CD4-positive, alpha-beta memory T cell (primary cell): ENCODE measurements at regions of chr3 and their contacts with region 1.

Region 1: GRCh38 chr3:42502429-42503250 is at the start of gene VIPR1:
- DNase-seq: peak; percentile 93 to 95 (median 94)
- H3K4me3 ChIP-seq: peak within 1 kb of the TSS; percentile 70 to 88
- H3K4me3 Mint-ChIP-seq: peak within 1 kb of the TSS; percentile 95 to 99 (median 96)
- H3K27ac ChIP-seq: peak within 1 kb of the TSS; percentile 64
- H3K27ac Mint-ChIP-seq: peak within 1 kb of the TSS; percentile 83 to 97 (median 95)
- H3K4me1 ChIP-seq: peaks cover 51% of the 10 kb centered on the region
- H3K4me1 Mint-ChIP-seq: peaks cover 27 to 61% (median 44%) of the 10 kb centered on the region in 4 donors
- H3K27me3 ChIP-seq: peaks cover 9% of the 10 kb centered on the region
- H3K27me3 Mint-ChIP-seq: peaks cover 7 to 10% of the 10 kb centered on the region in 2 donors
- total RNA-seq, gene VIPR1: 93.6 to 104 TPM

Region 2: DNA sequence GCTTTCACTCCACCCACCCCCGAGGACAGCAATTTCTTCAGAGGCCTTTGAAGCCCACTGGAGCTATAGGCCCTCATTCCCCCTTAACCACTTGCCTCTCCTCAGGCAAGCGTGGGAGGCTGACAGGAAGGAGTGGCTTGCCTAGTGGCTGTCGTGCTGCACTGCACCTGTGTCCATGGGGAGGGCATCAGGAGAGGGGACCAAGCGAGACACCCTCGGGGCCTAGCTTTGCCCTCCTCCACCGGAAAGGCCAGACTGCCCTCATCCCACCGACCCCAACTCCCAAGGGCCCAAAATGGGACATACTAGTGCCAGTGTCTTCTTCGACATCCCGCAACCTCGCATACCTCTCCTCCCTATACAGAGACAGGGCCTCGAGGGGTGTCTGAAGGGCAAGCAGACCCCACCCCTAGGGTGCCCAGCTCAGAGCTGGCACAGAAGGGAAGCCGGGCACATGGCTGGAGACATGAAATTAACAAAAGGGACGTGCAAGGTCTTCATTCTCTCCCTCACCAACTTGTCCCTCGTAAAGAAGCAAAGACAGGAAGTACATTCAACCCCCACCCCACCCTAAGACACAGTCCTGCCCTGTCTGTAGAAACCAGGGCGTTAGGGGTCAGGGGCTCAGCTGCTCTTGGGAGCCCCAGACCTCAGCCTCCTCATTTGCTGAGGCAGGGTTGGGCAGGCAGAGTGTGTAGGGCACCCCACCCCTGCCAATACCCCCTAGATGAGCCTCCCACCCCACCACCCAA is 24.2 kb after region 1 on chr3:
- CTCF ChIA-PET with region 1: interaction called, 1,823 read pairs
- POLR2A ChIA-PET with region 1: interaction called, 24 read pairs
- intact Hi-C with region 1: no loop called
- DNase-seq: peak; percentile 30 to 55 (median 42)
- H3K4me3 ChIP-seq: peak overlapping the region in 1 of 2 donors; percentile 1
- H3K4me3 Mint-ChIP-seq: peak overlapping the region in 7 of 8 donors; percentile 45 to 86 (median 74)
- H3K27ac ChIP-seq: peak overlapping the region; percentile 41
- H3K27ac Mint-ChIP-seq: peak overlapping the region; percentile 93 to 95 (median 94)
- H3K4me1 ChIP-seq: peaks cover 68% of the 10 kb centered on the region
- H3K4me1 Mint-ChIP-seq: peaks cover 44 to 94% (median 65%) of the 10 kb centered on the region in 4 donors
- H3K27me3 ChIP-seq: no peaks in the 10 kb centered on the region
- H3K27me3 Mint-ChIP-seq: no peaks in the 10 kb centered on the region

Region 3: DNA sequence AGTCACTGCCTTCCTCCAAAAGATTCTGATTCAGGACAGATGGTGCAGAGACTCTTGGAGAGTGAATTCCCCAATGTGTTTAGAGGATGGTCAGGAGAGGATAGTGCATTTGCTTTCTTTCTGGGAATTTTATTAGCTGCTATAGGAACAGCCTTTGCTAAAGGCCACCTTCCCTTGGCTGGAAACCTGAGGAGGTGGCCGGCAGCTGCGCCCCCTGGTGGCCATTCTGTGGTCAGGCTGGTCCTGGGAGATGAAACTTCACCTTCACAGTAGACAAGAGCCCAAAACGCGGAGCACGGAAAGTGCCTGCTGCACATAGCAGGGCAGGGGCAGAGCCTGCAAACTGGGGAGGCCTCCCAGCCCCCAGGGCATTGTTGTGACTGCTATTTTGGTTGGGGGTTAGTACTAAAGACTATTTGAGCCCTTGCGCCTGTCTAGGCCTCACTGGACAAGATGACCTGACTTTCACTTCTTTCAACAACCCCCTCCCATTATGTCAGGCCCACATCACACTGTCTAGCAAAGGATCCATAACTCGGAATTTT is 44.8 kb after region 1 on chr3:
- CTCF ChIA-PET with region 1: interaction called, 1,823 read pairs
- POLR2A ChIA-PET with region 1: interaction called, 28 read pairs
- intact Hi-C with region 1: no loop called
- DNase-seq: peak; percentile 57 to 68 (median 59)
- H3K4me3 ChIP-seq: no peak overlapping the region
- H3K4me3 Mint-ChIP-seq: no peak overlapping the region
- H3K27ac ChIP-seq: no peak overlapping the region
- H3K27ac Mint-ChIP-seq: peak overlapping the region in 4 of 7 donors; percentile 13 to 70 (median 44)
- H3K4me1 ChIP-seq: no peaks in the 10 kb centered on the region
- H3K4me1 Mint-ChIP-seq: peaks cover 4 to 26% (median 12%) of the 10 kb centered on the region in 4 donors
- H3K27me3 ChIP-seq: no peaks in the 10 kb centered on the region
- H3K27me3 Mint-ChIP-seq: no peaks in the 10 kb centered on the region

Region 4: GRCh38 chr3:42581709-42582473 is 79.3 kb after region 1 on chr3 and contains the start of gene SEC22C:
- CTCF ChIA-PET with region 1: interaction called, 10 read pairs
- POLR2A ChIA-PET with region 1: interaction called, 18 read pairs
- intact Hi-C with region 1: no loop called
- DNase-seq: peak; percentile 94 to 97 (median 95)
- H3K4me3 ChIP-seq: peak within 1 kb of the TSS; percentile 59 to 78
- H3K4me3 Mint-ChIP-seq: peak within 1 kb of the TSS; percentile 86 to 96 (median 94)
- H3K27ac ChIP-seq: peak within 1 kb of the TSS; percentile 96
- H3K27ac Mint-ChIP-seq: peak within 1 kb of the TSS; percentile 97 to 100 (median 99)
- H3K4me1 ChIP-seq: peaks cover 39% of the 10 kb centered on the region
- H3K4me1 Mint-ChIP-seq: peaks cover 38 to 59% (median 47%) of the 10 kb centered on the region in 4 donors
- H3K27me3 ChIP-seq: no peaks in the 10 kb centered on the region
- H3K27me3 Mint-ChIP-seq: no peaks in the 10 kb centered on the region
- total RNA-seq, gene SEC22C: 55.8 to 56.6 TPM

Region 5: DNA sequence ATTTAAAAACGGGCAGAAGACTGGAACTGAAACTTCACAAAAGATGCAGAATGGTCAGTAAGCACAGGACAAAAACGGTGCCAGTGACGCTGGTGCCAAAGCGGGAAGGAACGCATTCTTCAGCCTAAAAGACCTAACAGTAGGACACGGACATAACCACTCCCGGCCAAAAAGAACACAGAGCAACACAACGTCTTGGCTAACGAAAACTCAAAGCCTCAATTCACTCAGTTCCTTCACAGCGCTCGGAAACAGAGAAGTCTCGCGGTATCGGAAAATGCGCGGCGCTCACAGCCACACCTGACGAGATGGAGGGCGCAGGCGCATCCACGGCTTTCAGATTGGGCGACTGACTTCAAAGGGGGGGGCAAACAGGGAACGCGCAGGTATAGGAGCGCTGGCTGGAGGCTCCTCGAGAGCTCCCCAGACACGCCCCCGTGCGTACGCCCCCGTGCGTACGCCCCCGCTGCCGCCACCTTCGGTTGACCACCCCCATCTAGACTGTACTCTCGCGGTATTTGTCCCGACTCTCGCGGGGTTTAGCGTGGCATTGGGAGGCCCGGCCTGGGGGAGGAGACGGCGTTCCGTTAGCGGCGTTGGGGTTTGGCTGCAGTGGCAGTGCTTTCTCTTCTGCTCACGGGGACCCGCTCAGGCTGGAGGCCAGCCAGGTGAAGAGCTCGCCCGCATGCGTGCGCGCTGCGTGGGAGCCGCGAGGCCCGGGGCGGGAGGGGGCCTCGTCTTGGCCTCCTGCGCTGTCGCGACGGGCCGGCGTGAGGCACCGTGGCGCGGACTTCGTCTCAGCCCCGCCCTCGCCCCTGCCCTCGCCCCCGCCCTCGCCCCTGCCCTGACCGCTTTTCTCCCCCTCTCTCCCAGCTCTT is 97.7 kb after region 1 on chr3 and contains the start of gene NKTR:
- CTCF ChIA-PET with region 1: interaction called, 3 read pairs
- POLR2A ChIA-PET with region 1: interaction called, 14 read pairs
- intact Hi-C with region 1: loop called (anchors 1 kb)
- DNase-seq: peak; percentile 99 to 100 (median 100)
- H3K4me3 ChIP-seq: peak within 1 kb of the TSS; percentile 76 to 88
- H3K4me3 Mint-ChIP-seq: peak within 1 kb of the TSS; percentile 91 to 97 (median 94)
- H3K27ac ChIP-seq: peak within 1 kb of the TSS; percentile 85
- H3K27ac Mint-ChIP-seq: peak within 1 kb of the TSS; percentile 94 to 99 (median 98)
- H3K4me1 ChIP-seq: peaks cover 39% of the 10 kb centered on the region
- H3K4me1 Mint-ChIP-seq: peaks cover 27 to 49% (median 36%) of the 10 kb centered on the region in 4 donors
- H3K27me3 ChIP-seq: no peaks in the 10 kb centered on the region
- H3K27me3 Mint-ChIP-seq: no peaks in the 10 kb centered on the region
- total RNA-seq, gene NKTR: 256 to 269 TPM

Region 6: GRCh38 chr3:42755681-42756578 is 253.3 kb after region 1 on chr3:
- CTCF ChIA-PET with region 1: interaction called, 5 read pairs
- POLR2A ChIA-PET with region 1: no interaction called
- intact Hi-C with region 1: loop called (anchors 5 kb)
- DNase-seq: peak in 2 of 5 donors; percentile 10 to 16
- H3K4me3 ChIP-seq: no peak overlapping the region
- H3K4me3 Mint-ChIP-seq: no peak overlapping the region
- H3K27ac ChIP-seq: no peak overlapping the region
- H3K27ac Mint-ChIP-seq: peak overlapping the region in 2 of 7 donors; percentile 2 to 49
- H3K4me1 ChIP-seq: no peaks in the 10 kb centered on the region
- H3K4me1 Mint-ChIP-seq: peaks cover 0 to 6% (median 2%) of the 10 kb centered on the region in 4 donors
- H3K27me3 ChIP-seq: no peaks in the 10 kb centered on the region
- H3K27me3 Mint-ChIP-seq: peaks cover 2 to 5% of the 10 kb centered on the region in 2 donors

Region 7: DNA sequence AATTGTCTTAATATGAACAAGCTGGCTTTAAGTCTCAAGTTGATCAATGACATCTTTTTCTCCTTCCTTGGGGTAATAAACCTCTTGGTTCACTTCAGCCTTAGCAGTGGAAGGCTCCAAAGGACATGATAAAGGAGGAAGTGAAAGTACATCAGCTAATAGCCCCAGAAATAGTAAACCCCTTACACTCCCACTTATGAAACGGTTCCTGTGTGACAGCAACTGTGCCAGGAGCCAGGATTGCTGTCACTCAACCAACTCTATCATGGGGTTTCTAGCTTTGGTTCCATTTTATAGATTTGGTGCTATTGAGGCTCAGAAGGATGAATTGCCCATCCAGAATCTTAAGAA is 1404.8 kb after region 1 on chr3:
- CTCF ChIA-PET with region 1: no interaction called
- POLR2A ChIA-PET with region 1: no interaction called
- intact Hi-C with region 1: no loop called
- DNase-seq: no peak
- H3K4me3 ChIP-seq: no peak overlapping the region
- H3K4me3 Mint-ChIP-seq: no peak overlapping the region
- H3K27ac ChIP-seq: no peak overlapping the region
- H3K27ac Mint-ChIP-seq: no peak overlapping the region
- H3K4me1 ChIP-seq: no peaks in the 10 kb centered on the region
- H3K4me1 Mint-ChIP-seq: no peaks in the 10 kb centered on the region
- H3K27me3 ChIP-seq: no peaks in the 10 kb centered on the region
- H3K27me3 Mint-ChIP-seq: peaks cover 8 to 14% of the 10 kb centered on the region in 2 donors